Activated T-helper 1 cell treated with anti-CD3 and anti-CD28 coated beads, Interleukin-12 subunit alpha, Interleukin-12 subunit beta, Interleukin-2, Interleukin-4 antibody, amounts not matched to agents 30 ng/mL and 10 ng/mL and 1 ng/mL, durations not matched to agents 14 hours and 24 hours and 36 hours (primary cell): ENCODE measurements at regions of chr15 and their contacts with region 1.

Region 1: DNA sequence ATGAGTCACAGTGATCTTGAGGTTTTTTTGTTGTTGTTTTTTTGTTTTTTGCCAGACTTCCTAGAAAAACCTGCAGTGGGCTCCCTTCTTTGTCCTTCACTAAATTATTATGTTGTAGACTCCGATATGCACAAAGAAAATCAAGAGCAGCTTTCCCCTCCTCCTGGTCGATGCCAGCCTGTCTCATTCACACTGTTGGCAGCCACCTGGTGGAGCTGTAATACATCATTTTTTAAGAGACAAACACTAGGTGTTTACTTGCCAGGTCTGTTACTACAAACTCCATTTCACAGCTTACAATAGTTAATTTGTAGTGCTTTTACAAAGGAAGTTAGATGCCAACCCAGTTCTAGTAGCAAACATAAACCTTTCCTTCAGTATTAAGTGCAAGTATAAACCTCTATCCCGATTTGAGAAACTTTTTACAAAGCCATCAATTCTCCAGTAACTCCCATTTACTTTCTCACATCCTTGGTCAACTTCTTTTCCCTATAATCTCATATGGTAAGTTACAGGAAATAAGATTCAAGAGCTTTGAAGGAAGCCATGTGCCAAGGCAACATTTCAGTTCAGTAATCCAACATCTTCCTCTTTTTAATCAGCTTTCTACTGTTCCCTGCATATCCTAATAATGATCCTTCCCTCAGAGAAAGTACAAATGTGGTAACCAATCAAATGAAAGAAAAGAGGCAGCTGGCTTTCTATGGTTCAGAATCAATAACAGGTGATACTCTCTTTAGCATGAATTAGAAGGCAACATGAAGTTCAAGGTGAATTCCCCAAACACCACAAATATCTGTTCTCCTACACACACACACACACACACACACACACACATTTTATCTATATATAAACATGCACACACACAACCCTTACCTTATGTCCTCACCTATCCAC is 14.0 kb downstream of the AAGAB start:
- DNase-seq: no peak
- H3K4me3 Mint-ChIP-seq: peak overlapping the region; percentile 47
- H3K27ac Mint-ChIP-seq: peak overlapping the region; percentile 87
- H3K4me1 Mint-ChIP-seq: peaks cover 49% of the 10 kb centered on the region
- H3K27me3 Mint-ChIP-seq: no peaks in the 10 kb centered on the region

Region 2: GRCh38 chr15:67065444-67066093 is 174.9 kb before region 1 on chr15 and contains the start of gene SMAD3:
- intact Hi-C with region 1: loop called (anchors 2 kb)
- DNase-seq: peak; percentile 81
- H3K4me3 Mint-ChIP-seq: peak within 1 kb of the TSS; percentile 100
- H3K27ac Mint-ChIP-seq: peak within 1 kb of the TSS; percentile 95
- H3K4me1 Mint-ChIP-seq: peaks cover 65% of the 10 kb centered on the region
- H3K27me3 Mint-ChIP-seq: peaks cover 3% of the 10 kb centered on the region
- total RNA-seq, gene SMAD3: 80.2 and 80.4 TPM in 2 replicates

Region 3: DNA sequence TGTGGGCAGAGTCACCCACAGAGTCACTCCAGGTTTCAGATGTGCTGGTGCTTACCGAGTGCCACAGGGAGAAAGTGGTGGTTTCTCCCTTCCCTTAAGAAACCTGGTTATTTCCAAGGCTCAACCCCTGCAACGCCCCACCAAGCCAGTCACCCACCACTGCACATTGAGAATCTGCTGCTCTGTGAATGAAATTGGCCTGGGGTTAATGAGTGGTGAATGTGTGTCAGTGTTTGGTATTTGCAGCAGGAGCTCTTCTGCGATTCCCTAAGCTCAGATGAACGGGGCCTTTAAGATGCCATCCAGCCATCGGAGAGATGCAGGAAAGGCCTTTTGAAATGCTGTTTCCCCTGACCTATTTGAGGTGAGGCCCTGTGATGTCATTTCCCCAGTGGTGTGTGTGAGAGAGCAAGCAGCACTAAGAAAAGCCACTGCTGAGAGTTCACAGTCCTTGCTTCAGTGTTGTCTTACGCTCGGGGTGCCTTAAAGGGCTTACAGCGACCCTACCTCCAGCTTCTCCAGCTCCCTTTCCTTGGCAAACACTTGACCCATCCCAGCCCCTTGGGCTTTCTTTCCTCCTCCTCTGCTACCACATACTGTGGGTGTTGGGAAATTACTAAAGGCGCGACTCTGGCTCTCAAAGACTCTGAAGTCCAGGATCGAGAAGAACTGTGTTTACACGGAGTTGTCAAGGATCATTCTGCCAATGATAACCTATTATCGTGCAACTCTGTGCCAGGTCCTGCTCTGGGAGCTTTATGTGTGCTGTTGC is 106.2 kb before region 1 on chr15:
- intact Hi-C with region 1: loop called (anchors 2 kb)
- DNase-seq: peak; percentile 69
- H3K4me3 Mint-ChIP-seq: peak overlapping the region; percentile 86
- H3K27ac Mint-ChIP-seq: peak overlapping the region; percentile 98
- H3K4me1 Mint-ChIP-seq: peaks cover 100% of the 10 kb centered on the region
- H3K27me3 Mint-ChIP-seq: no peaks in the 10 kb centered on the region

Region 4: GRCh38 chr15:67254238-67255175 is 14.0 kb after region 1 on chr15 and contains the starts of genes AAGAB and IQCH:
- intact Hi-C with region 1: loop called (anchors 1 kb)
- DNase-seq: peak; percentile 98
- H3K4me3 Mint-ChIP-seq: peak within 1 kb of the TSS; percentile 100
- H3K27ac Mint-ChIP-seq: peak within 1 kb of the TSS; percentile 98
- H3K4me1 Mint-ChIP-seq: peaks cover 36% of the 10 kb centered on the region
- H3K27me3 Mint-ChIP-seq: peaks cover 18% of the 10 kb centered on the region
- total RNA-seq, gene AAGAB: 41.7 and 44.0 TPM in 2 replicates
- total RNA-seq, gene IQCH: 0.88 and 1.2 TPM in 2 replicates

Region 5: GRCh38 chr15:67762610-67763368 is 522.3 kb after region 1 on chr15:
- intact Hi-C with region 1: loop called (anchors 5 kb)
- DNase-seq: peak; percentile 37
- H3K4me3 Mint-ChIP-seq: peak overlapping the region; percentile 24
- H3K27ac Mint-ChIP-seq: peak overlapping the region; percentile 41
- H3K4me1 Mint-ChIP-seq: peaks cover 46% of the 10 kb centered on the region
- H3K27me3 Mint-ChIP-seq: peaks cover 20% of the 10 kb centered on the region